Right lobe of liver (tissue), 6 donors: ENCODE measurements at regions of chr3 and their contacts with region 1.

Region 1: DNA sequence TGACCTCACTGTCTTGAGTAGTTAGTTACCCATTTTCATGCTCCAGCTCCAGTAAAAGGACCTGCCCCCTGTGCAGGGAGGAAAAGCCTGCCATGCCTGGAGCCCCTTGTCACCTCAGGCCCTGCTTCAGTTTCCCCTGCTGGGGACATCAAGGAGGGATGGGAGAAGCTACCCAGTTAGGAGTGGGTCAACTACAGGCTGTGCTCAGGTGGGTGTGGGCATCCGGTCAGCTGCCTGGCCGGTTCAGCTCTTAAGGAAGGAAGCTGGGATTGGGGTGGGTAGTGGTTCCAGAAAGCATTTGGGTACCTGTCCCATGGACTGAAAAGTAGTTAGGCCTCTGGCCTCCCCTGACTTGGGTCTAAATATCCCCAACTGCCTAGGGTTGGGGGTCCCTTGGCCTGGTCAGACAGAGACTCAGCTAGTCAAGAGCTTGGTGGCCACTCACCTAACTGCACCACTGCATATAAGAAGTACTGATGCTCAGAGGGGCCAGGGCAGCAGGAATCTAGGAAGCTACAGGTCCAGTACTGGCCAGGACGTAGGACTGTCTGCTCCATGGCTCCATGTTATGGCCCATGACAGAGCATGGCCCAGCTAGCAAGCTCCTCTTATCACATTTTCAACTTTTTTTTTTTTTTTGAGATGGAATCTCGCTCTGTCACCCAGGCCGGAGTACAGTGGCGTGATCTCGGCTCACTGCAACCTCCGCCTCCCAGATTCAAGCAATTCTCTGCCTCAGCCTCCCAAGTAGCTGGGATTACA is 549 bp downstream of the LSMEM2 start:
- DNase-seq: no peak
- ATAC-seq: no peak
- H3K4me3 ChIP-seq: no peak overlapping the region
- H3K27ac ChIP-seq: no peak overlapping the region
- H3K4me1 ChIP-seq: peaks cover 0 to under 1% (median 0%) of the 10 kb centered on the region in 4 donors
- H3K27me3 ChIP-seq: no peaks in the 10 kb centered on the region
- CTCF ChIP-seq: no peak
- POLR2A ChIP-seq: no peak

Region 2: DNA sequence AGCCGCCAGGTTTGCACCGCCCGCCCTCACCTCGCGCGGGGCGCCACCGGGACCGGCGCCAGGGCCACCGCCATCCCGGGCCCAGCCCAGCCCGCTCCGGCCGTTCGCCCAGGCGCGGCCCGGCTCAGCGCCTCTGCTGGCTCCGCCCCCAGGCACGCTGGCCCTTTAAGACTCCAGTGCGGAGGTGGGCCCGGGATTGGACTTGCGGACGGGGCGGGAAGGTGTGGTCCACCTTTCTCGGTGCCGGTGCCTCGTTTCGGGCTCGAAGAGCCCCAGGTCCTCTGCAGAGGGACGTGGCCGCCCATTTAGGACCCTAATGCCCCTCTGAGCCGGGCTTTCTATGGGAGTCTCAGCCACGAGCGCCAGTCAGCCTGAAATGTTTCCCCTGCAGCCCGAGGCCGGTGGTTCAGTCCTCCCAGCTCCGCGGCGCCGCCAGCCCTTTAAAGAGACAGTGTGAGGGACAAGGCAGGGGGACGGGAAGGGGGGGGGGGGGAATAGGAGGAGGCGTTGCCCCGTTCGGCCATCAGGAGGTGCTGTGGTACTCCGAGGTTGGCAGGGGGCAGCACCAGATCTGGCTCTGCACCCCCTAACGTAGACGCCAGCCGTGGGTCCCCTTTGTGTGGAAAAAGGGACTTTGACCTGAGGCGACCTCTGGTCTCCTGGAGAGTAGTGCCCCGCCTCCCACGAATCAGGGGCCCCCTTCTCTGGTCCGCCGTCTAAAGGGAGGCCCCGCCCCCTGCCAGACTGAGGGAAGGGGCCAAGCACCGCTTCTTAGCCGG is 42.1 kb after region 1 on chr3:
- intact Hi-C with region 1: loop called (anchors 5 kb)
- DNase-seq: peak; percentile 91 to 93 (median 92)
- ATAC-seq: peak; percentile 73 to 84 (median 77)
- H3K4me3 ChIP-seq: peak overlapping the region; percentile 88 to 89 (median 89)
- H3K27ac ChIP-seq: peak overlapping the region; percentile 98 to 99 (median 98)
- H3K4me1 ChIP-seq: peaks cover 0 to 56% (median 16%) of the 10 kb centered on the region in 4 donors
- H3K27me3 ChIP-seq: no peaks in the 10 kb centered on the region
- CTCF ChIP-seq: peak; percentile 34 to 52 (median 43)
- POLR2A ChIP-seq: peak; percentile 77